ENCODE measurements at regions of chr7 and their contacts with region 1.

Region 1: GRCh38 chr7:39894904-39895303 is 55.2 kb upstream of the CDK13 start:
- DNase-seq: no peak
- H3K4me3 ChIP-seq: no peak overlapping the region
- H3K27ac ChIP-seq: no peak overlapping the region
- H3K4me1 ChIP-seq: peaks cover 29% of the 10 kb centered on the region
- H3K27me3 ChIP-seq: no peaks in the 10 kb centered on the region
- CTCF ChIP-seq: no peak

Region 2: GRCh38 chr7:39580149-39580874 is 314.6 kb before region 1 on chr7:
- CTCF ChIA-PET with region 1: no interaction called
- POLR2A ChIA-PET with region 1: no interaction called
- intact Hi-C with region 1: loop called (anchors 5 kb)
- DNase-seq: peak; percentile 75 to 81
- H3K4me3 ChIP-seq: no peak overlapping the region
- H3K27ac ChIP-seq: no peak overlapping the region
- H3K4me1 ChIP-seq: no peaks in the 10 kb centered on the region
- H3K27me3 ChIP-seq: no peaks in the 10 kb centered on the region
- CTCF ChIP-seq: peak; percentile 97

Region 3: GRCh38 chr7:39927018-39927417 is 32.1 kb after region 1 on chr7:
- CTCF ChIA-PET with region 1: no interaction called
- POLR2A ChIA-PET with region 1: no interaction called
- intact Hi-C with region 1: no loop called
- DNase-seq: no peak
- H3K4me3 ChIP-seq: no peak overlapping the region
- H3K27ac ChIP-seq: no peak overlapping the region
- H3K4me1 ChIP-seq: no peaks in the 10 kb centered on the region
- H3K27me3 ChIP-seq: no peaks in the 10 kb centered on the region
- CTCF ChIP-seq: no peak

Measured in PC-9 (cell line).